Activated T-helper 1 cell treated with anti-CD3 and anti-CD28 coated beads, Interleukin-12 subunit alpha, Interleukin-12 subunit beta, Interleukin-2, Interleukin-4 antibody, amounts not matched to agents 30 ng/mL and 10 ng/mL and 1 ng/mL, durations not matched to agents 14 hours and 24 hours and 36 hours (primary cell): ENCODE measurements at regions of chr1 and their contacts with region 1.

Region 1: GRCh38 chr1:197902454-197903195 is at the start of gene C1orf53:
- DNase-seq: peak; percentile 78
- H3K4me3 Mint-ChIP-seq: peak within 1 kb of the TSS; percentile 91
- H3K27ac Mint-ChIP-seq: peak within 1 kb of the TSS; percentile 93
- H3K4me1 Mint-ChIP-seq: peaks cover 17% of the 10 kb centered on the region
- H3K27me3 Mint-ChIP-seq: peaks cover 55% of the 10 kb centered on the region
- total RNA-seq, gene C1orf53: 0.81 and 1.3 TPM in 2 replicates

Region 2: GRCh38 chr1:197526736-197527371 is 375.8 kb before region 1 on chr1:
- intact Hi-C with region 1: loop called (anchors 1 kb)
- DNase-seq: no peak
- H3K4me3 Mint-ChIP-seq: no peak overlapping the region
- H3K27ac Mint-ChIP-seq: no peak overlapping the region
- H3K4me1 Mint-ChIP-seq: no peaks in the 10 kb centered on the region
- H3K27me3 Mint-ChIP-seq: no peaks in the 10 kb centered on the region

Region 3: DNA sequence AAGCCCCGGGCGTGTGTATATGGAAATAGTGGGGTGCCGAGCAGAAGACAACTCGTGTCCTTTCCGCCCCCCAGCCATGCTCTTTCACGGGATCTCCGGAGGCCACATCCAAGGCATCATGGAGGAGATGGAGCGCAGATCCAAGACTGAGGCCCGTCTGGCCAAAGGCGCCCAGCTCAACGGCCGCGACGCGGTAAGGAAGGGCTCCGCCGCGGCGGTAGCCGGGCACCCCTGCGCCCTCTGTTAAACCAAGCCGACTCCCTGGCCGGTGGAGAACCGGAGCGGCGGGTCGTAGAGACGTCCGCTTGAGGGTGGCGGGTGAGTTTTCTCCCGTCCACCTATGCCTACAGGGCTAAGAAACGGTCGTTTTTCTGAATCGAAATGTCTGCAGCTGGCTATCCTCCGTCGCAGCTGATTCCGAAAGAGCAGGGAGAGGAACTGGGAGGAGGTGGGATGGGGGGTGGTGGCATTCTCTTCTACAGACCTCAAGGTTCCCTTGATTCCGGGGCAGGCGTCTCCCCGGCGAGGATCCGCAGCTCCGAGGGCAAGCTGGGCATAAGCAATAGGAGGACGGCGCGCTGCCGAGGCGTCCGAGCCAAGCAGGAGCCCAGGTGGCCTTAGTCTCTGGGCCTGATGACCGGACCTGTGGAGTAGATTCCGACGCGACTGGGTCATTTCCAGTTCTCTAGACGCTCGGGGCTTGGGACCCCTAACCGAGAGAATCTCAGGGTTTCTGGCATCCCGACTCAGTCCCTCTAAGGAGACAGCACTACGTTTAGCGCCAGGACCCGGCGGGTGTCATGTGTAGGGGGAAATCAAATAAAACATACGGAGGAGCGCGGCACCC is 15.4 kb after region 1 on chr1:
- intact Hi-C with region 1: loop called (anchors 2 kb)
- DNase-seq: no peak
- H3K4me3 Mint-ChIP-seq: peak overlapping the region; percentile 71
- H3K27ac Mint-ChIP-seq: peak overlapping the region; percentile 15
- H3K4me1 Mint-ChIP-seq: peaks cover 67% of the 10 kb centered on the region
- H3K27me3 Mint-ChIP-seq: peaks cover 98% of the 10 kb centered on the region

Region 4: GRCh38 chr1:197955486-197956394 is 53.1 kb after region 1 on chr1:
- intact Hi-C with region 1: no loop called
- DNase-seq: no peak
- H3K4me3 Mint-ChIP-seq: no peak overlapping the region
- H3K27ac Mint-ChIP-seq: no peak overlapping the region
- H3K4me1 Mint-ChIP-seq: no peaks in the 10 kb centered on the region
- H3K27me3 Mint-ChIP-seq: no peaks in the 10 kb centered on the region